BJ (cell line): ENCODE measurements at regions of chr3 and their contacts with region 1.

Region 1: DNA sequence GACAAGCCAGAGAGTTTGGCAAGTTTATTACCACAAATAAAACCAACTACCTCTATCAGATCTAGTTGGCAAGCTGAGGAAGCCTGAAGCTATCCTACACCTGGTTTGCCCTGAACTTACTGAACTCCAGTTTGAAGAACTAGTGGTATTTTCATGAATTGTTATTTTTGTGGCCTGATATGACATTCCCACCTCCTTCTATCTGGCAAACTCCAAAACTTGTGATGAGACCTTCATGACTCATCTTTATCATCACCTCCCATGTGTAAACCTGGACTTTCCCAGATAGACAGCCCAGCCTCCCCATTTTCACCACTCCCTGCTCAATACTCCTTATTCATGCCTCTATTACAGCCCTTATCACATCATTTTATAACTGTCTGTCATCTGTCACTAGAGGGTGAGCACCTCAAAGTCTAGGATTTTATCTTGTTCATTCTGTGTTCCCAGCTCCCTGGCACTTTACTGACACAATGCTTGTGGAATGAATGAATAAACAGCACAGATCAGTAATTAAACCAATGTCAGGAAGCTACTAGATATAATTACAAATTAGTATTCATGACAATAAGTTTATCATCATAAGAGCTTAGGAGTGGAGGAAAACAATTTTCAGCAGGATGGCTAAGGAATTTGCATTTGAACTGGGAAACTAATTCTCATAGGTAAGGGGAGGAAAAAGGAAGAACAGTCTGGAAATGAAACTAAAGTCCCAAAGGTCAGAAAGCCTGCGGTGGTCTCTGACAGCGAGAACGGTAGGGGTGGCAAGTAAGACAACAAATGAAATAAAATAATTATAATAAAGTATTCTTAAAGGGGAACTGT is 13.2 kb upstream of the TRANK1 start:
- DNase-seq: no peak
- H3K4me3 ChIP-seq: no peak overlapping the region
- H3K27me3 ChIP-seq: peaks cover 1% of the 10 kb centered on the region; the same call in 1 of the 2 replicates
- CTCF ChIP-seq: no peak

Region 2: DNA sequence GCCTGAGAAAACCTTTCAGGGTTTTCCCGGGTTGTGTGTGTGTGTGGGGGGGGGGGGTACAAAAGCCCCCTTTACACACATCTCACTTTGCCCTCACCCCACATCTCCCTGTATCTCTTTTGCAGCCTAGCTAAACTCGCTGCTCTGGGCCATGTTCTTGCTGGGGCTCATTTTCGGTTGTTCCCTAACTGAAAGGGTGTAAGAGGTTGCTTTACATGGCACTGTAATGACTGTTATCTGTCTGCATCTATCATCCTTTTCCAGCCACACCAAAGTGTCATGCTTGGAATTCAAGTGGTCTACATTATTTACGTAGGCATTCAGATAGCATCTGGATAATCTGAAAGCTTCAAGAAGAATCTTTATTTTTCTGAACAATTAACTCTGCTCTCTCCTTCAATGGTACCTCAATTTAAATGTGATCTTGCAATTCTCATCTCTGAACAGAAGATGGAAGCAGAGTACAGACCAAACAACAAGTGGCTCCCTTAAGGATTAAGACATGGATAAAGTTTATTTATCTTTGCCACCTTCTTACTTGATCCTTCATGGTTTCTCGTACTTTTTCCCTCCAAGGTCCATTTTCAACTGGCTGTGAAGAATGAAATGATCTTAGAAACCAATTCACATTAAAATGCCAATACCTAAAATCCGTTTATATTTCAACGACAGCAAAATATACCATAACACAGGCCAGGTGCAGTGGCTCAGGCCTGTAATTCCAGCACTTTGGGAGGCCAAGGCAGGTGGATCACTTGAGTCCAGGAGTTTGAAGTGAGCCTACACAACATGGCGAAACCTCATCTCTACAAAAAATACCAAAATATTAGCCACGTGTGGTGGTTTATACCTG is 228.6 kb before region 1 on chr3:
- CTCF ChIA-PET with region 1: interaction called, 13 read pairs
- POLR2A ChIA-PET with region 1: no interaction called
- DNase-seq: no peak
- H3K4me3 ChIP-seq: no peak overlapping the region
- H3K27me3 ChIP-seq: peaks cover 6% of the 10 kb centered on the region; the same call in 1 of the 2 replicates
- CTCF ChIP-seq: peak; percentile 68

Region 3: DNA sequence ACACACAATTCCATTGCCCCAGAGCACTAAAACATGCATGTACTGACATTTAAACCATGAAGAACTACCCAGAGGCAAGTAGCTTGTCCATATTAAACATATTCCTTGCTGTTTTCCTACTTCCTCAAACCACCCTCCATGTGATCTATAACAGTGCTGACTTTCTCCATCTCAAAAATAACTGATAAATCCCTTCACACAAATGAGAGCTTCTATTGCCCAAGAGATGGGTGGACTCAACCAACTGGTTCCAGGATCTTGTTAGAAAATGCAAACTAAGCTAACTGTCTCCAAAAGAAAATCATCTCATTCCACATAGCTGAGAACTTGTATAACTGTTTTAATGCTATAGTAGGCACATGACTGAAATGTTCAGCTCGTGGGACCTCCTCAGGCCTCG is 223.3 kb before region 1 on chr3:
- CTCF ChIA-PET with region 1: interaction called, 13 read pairs
- POLR2A ChIA-PET with region 1: no interaction called
- DNase-seq: no peak
- H3K4me3 ChIP-seq: no peak overlapping the region
- H3K27me3 ChIP-seq: peaks cover 5% of the 10 kb centered on the region
- CTCF ChIP-seq: no peak

Region 4: DNA sequence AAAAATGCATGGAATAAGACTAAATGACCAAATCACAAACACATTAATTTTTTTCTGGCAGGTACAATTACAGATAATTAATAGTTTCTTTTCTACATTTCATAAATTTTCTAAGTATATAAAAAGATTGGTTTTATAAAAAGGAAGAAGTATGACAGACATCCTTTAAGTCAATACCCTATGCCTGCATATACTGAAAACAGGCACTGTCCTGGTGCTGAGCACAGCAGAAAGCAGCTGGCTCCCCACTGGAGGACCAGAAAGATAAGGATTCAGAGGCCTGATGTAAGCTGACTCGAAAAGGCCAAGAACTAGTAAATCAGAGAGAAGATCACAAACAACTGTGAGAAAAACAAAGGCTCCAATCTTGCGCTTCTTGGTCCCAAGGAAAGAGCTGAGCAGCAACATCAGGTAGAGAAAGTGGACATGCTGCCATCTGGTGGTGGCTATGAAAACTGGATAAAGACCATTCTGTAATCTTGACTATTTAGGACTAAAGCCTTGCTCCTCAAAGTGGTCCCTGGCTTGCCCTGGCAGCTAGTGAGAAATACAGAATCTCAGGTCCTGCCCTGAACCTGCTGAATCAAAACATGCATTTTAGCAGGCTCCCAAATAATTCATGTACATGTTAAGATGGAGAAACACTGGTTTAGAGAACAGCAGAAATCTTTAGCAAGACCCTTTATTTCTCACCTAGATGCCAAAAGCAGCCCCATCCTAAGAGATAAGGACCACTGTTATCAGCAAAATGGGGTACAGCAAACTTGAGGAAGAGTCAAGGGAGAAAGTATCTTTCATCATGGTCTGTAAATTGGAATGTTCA is 89.2 kb before region 1 on chr3:
- CTCF ChIA-PET with region 1: interaction called, 21 read pairs
- POLR2A ChIA-PET with region 1: no interaction called
- DNase-seq: peak; percentile 3
- H3K4me3 ChIP-seq: no peak overlapping the region
- H3K27me3 ChIP-seq: no peaks in the 10 kb centered on the region
- CTCF ChIP-seq: peak; percentile 82

Region 5: DNA sequence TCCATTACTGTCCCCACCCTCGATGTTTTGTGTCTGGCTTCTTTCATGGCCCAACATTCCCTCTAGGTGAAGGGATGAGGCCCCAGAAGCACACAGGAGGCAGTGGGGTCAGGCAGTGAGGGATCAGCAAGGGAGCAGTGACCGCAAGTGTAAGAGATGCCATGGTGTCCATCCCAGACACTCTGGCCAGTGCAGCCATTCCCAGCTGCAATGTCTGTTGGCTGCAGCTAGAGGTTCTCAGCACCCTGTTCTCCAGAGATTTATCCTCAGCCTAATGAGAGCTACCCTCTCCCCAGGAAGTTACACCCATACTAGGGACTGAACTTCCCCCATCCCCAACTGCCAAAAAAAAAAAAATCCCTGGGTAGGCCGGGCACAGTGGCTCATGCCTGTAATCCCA is 53.4 kb before region 1 on chr3:
- CTCF ChIA-PET with region 1: interaction called, 21 read pairs
- POLR2A ChIA-PET with region 1: no interaction called
- DNase-seq: no peak
- H3K4me3 ChIP-seq: no peak overlapping the region
- H3K27me3 ChIP-seq: no peaks in the 10 kb centered on the region
- CTCF ChIP-seq: peak; percentile 44

Region 6: DNA sequence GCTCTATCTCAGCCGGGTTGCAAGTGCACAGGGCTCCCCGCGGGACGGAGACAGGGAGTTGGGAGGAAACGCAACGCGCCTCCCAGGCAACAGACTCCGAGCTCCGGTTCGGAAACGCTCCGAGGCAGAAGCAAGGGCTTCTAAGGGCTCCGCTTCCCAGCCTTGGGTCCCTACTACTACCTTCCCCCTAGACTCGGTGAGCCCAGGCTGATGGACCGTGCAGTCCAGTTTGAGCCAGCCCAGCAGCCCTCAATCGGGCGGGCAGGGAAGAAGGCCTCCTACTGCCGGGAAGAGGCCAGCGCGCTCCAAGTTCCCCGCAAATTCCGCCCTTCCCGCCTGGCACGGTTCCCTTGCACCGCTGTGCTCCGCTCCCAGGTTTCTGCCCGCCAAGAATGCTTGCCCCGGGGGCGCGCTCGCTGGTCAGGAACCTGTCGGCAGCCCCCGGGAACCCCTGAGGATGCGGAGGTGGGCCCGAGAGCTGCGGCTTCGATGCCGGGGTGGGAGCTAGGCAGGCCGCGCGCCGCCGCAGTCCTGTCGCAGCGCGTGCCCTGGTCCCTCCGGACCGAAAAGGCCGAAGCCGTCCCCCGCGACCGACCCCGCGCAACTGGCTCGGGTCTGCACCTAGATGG is 13.9 kb before region 1 on chr3:
- CTCF ChIA-PET with region 1: interaction called, 22 read pairs
- POLR2A ChIA-PET with region 1: interaction called, 5 read pairs
- DNase-seq: no peak
- H3K4me3 ChIP-seq: peak overlapping the region; percentile 64
- H3K27me3 ChIP-seq: no peaks in the 10 kb centered on the region
- CTCF ChIP-seq: peak; percentile 30; the same call in 1 of the 2 replicates

Region 7: GRCh38 chr3:36969540-36970432 is 11.7 kb after region 1 on chr3:
- CTCF ChIA-PET with region 1: interaction called, 22 read pairs
- POLR2A ChIA-PET with region 1: no interaction called
- DNase-seq: no peak
- H3K4me3 ChIP-seq: no peak overlapping the region
- H3K27me3 ChIP-seq: no peaks in the 10 kb centered on the region
- CTCF ChIP-seq: no peak